ENCODE measurements at regions of chr20 and their contacts with region 1.

Region 1: DNA sequence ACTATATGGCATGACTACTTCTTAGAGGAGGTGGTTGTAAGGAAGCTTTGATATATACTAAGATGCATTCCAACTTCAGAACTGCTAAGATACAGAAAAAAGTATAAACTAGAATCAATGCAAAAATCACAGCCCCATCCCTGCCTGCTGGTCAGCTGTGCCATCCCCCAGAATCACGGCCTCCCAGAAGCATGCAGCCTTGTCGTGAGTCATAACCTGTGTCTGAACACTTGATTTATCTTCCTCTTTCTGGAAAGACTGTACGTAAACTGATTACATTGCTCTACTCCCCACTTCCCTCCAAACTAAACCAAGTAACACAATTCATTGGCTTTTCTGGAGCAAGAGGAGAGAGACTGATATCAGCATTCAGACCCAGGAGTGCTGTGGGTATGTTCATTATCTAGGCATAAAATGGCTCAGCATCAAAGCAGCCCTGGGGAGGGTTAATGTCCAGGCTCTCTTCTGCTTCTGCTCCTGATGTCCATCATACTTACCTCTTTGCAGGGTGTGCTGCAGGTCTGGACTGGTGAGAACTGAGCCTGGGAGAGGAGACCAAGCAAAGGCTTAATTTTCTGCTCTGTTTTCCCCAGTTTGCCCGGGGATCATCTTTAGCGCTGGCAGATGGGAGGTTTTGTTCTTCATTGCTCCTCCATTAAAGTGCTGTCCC is 18.4 kb downstream of the SCP2D1 start:
- DNase-seq: no peak
- H3K4me3 ChIP-seq: no peak overlapping the region
- H3K27ac ChIP-seq: no peak overlapping the region
- H3K4me1 ChIP-seq: no peaks in the 10 kb centered on the region
- H3K27me3 ChIP-seq: no peaks in the 10 kb centered on the region
- CTCF ChIP-seq: no peak

Region 2: DNA sequence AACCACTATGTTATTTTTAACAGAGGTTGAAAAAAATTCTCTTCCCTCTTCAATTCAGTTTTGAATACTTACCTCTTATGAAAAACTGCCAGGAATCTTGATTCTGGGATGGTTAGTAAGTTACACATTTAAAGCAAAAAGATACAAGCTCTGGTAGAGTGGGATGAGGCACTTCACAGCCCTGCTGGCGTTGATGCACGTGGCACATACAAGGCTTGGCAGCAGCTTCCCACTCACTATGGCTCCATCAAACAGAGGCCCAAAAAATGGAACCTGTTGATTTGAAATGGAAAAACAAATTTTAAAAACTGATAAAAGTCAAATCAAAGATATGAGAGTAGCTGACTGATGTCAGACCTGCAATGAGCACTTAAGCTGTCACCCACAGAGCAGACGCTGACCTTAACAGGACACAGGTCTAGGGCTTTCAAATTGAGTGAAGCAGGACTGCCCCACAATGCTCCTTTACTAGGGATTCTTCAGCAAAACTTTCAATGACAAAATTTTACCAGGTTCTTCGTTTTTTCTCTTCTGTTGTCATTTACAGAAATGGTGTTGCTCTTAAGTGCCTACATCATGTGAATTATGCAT is 1640.8 kb after region 1 on chr20:
- CTCF ChIA-PET with region 1: no interaction called
- POLR2A ChIA-PET with region 1: no interaction called
- intact Hi-C with region 1: loop called (anchors 10 kb)
- DNase-seq: no peak
- H3K4me3 ChIP-seq: no peak overlapping the region
- H3K27ac ChIP-seq: no peak overlapping the region
- H3K4me1 ChIP-seq: no peaks in the 10 kb centered on the region
- H3K27me3 ChIP-seq: no peaks in the 10 kb centered on the region
- CTCF ChIP-seq: no peak